ENCODE measurements at regions of chr3 and their contacts with region 1.

Region 1: GRCh38 chr3:4493014-4493940 is at the start of gene ITPR1:
- DNase-seq: peak; percentile 99
- ATAC-seq: peak; percentile 99
- H3K4me3 ChIP-seq: peak within 1 kb of the TSS; percentile 57
- H3K27ac ChIP-seq: peak within 1 kb of the TSS; percentile 72
- H3K4me1 ChIP-seq: peaks cover 2% of the 10 kb centered on the region
- H3K27me3 ChIP-seq: no peaks in the 10 kb centered on the region
- total RNA-seq, gene ITPR1: 32.5 to 59.0 (median 45.6) TPM

Region 2: GRCh38 chr3:4350789-4351163 is 142.5 kb before region 1 on chr3:
- intact Hi-C with region 1: loop called in 1 of 4 experiments (anchors 10 kb)
- DNase-seq: no peak
- ATAC-seq: peak; percentile 90 to 92
- H3K4me3 ChIP-seq: peak overlapping the region; percentile 60
- H3K27ac ChIP-seq: no peak overlapping the region
- H3K4me1 ChIP-seq: no peaks in the 10 kb centered on the region
- H3K27me3 ChIP-seq: no peaks in the 10 kb centered on the region

Region 3: GRCh38 chr3:4561661-4562060 is 68.4 kb after region 1 on chr3:
- intact Hi-C with region 1: no loop called
- DNase-seq: no peak
- ATAC-seq: no peak
- H3K4me3 ChIP-seq: no peak overlapping the region
- H3K27ac ChIP-seq: no peak overlapping the region
- H3K4me1 ChIP-seq: peaks cover 6% of the 10 kb centered on the region
- H3K27me3 ChIP-seq: no peaks in the 10 kb centered on the region

Region 4: GRCh38 chr3:4584456-4585249 is 91.4 kb after region 1 on chr3:
- intact Hi-C with region 1: loop called in 1 of 4 experiments (anchors 5 kb)
- DNase-seq: peak; percentile 39 to 65 (median 54)
- ATAC-seq: peak; percentile 26 to 51
- H3K4me3 ChIP-seq: peak overlapping the region; percentile 33
- H3K27ac ChIP-seq: peak overlapping the region; percentile 44
- H3K4me1 ChIP-seq: peaks cover 26% of the 10 kb centered on the region
- H3K27me3 ChIP-seq: no peaks in the 10 kb centered on the region

Region 5: GRCh38 chr3:4601892-4602291 is 108.6 kb after region 1 on chr3:
- intact Hi-C with region 1: loop called in 1 of 4 experiments (anchors 10 kb)
- DNase-seq: no peak
- ATAC-seq: no peak
- H3K4me3 ChIP-seq: no peak overlapping the region
- H3K27ac ChIP-seq: no peak overlapping the region
- H3K4me1 ChIP-seq: peaks cover 3% of the 10 kb centered on the region
- H3K27me3 ChIP-seq: no peaks in the 10 kb centered on the region

Region 6: GRCh38 chr3:4633078-4634004 is 140.1 kb after region 1 on chr3:
- intact Hi-C with region 1: loop called in 1 of 4 experiments (anchors 10 kb)
- DNase-seq: no peak
- ATAC-seq: peak; percentile 72 to 76
- H3K4me3 ChIP-seq: no peak overlapping the region
- H3K27ac ChIP-seq: no peak overlapping the region
- H3K4me1 ChIP-seq: no peaks in the 10 kb centered on the region
- H3K27me3 ChIP-seq: no peaks in the 10 kb centered on the region

Region 7: GRCh38 chr3:4814305-4814903 is 321.1 kb after region 1 on chr3:
- intact Hi-C with region 1: no loop called
- DNase-seq: peak; percentile 52 to 74 (median 73)
- ATAC-seq: peak; percentile 72 to 91
- H3K4me3 ChIP-seq: no peak overlapping the region
- H3K27ac ChIP-seq: no peak overlapping the region
- H3K4me1 ChIP-seq: no peaks in the 10 kb centered on the region
- H3K27me3 ChIP-seq: no peaks in the 10 kb centered on the region

Measured in right cardiac atrium (tissue), 5 donors.